Sigmoid colon (tissue), 7 donors: ENCODE measurements at regions of chr1 and their contacts with region 1.

Region 1: GRCh38 chr1:39905172-39905571 is 3.5 kb upstream of the MYCL start:
- DNase-seq: no peak
- H3K4me3 ChIP-seq: no peak overlapping the region
- H3K27ac ChIP-seq: no peak overlapping the region
- H3K4me1 ChIP-seq: peaks cover 0 to 19% (median 19%) of the 10 kb centered on the region in 4 donors
- H3K27me3 ChIP-seq: peaks cover 7 to 49% (median 28%) of the 10 kb centered on the region in 3 donors
- CTCF ChIP-seq: no peak
- EP300 ChIP-seq: no peak
- POLR2A ChIP-seq: no peak

Region 2: GRCh38 chr1:39727221-39727931 is 177.8 kb before region 1 on chr1:
- intact Hi-C with region 1: no loop called
- DNase-seq: no peak
- H3K4me3 ChIP-seq: no peak overlapping the region
- H3K27ac ChIP-seq: no peak overlapping the region
- H3K4me1 ChIP-seq: no peaks in the 10 kb centered on the region
- H3K27me3 ChIP-seq: peaks cover 7 to 51% (median 18%) of the 10 kb centered on the region in 3 donors
- CTCF ChIP-seq: no peak
- EP300 ChIP-seq: no peak
- POLR2A ChIP-seq: no peak

Region 3: GRCh38 chr1:39816415-39817090 is 88.6 kb before region 1 on chr1:
- intact Hi-C with region 1: loop called (anchors 2 kb)
- DNase-seq: peak; percentile 77
- H3K4me3 ChIP-seq: no peak overlapping the region
- H3K27ac ChIP-seq: no peak overlapping the region
- H3K4me1 ChIP-seq: no peaks in the 10 kb centered on the region
- H3K27me3 ChIP-seq: peaks cover 0 to 16% (median 4%) of the 10 kb centered on the region in 3 donors
- CTCF ChIP-seq: peak; percentile 60 to 96 (median 86)
- EP300 ChIP-seq: no peak
- POLR2A ChIP-seq: no peak

Region 4: DNA sequence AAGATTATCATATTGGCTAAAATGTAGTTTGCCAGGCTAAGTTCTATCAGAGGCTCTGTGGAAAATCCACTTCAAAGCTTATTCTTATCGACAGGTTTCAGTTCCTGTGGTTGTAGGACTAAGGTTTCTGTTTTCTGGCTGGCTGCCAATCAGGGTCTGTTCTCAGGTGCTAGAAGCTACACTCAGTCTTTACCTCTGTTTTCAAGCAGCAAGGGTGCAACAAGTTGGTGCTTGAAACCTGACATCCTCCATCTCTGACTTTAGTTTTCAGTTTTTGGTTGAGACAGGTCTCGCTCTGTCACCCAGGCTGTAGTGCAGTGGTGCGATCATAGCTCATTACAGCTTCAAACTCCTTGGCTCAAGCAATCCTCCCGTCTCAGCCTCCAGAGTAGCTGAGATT is 327.3 kb after region 1 on chr1:
- intact Hi-C with region 1: no loop called
- DNase-seq: no peak
- H3K4me3 ChIP-seq: no peak overlapping the region
- H3K27ac ChIP-seq: no peak overlapping the region
- H3K4me1 ChIP-seq: no peaks in the 10 kb centered on the region
- H3K27me3 ChIP-seq: no peaks in the 10 kb centered on the region
- CTCF ChIP-seq: no peak
- EP300 ChIP-seq: no peak
- POLR2A ChIP-seq: no peak